Activated naive CD4-positive, alpha-beta T cell treated with anti-CD3 and anti-CD28 coated beads for 36 hours (primary cell): ENCODE measurements at regions of chr16 and their contacts with region 1.

Region 1: GRCh38 chr16:30534368-30535105 is at the start of gene ZNF747:
- DNase-seq: peak; percentile 94
- H3K4me3 Mint-ChIP-seq: peak within 1 kb of the TSS; percentile 96
- H3K27ac Mint-ChIP-seq: peak within 1 kb of the TSS; percentile 99
- H3K4me1 Mint-ChIP-seq: peaks cover 49% of the 10 kb centered on the region
- H3K27me3 Mint-ChIP-seq: no peaks in the 10 kb centered on the region
- total RNA-seq, gene ZNF747: 5.1 to 6.1 TPM

Region 2: DNA sequence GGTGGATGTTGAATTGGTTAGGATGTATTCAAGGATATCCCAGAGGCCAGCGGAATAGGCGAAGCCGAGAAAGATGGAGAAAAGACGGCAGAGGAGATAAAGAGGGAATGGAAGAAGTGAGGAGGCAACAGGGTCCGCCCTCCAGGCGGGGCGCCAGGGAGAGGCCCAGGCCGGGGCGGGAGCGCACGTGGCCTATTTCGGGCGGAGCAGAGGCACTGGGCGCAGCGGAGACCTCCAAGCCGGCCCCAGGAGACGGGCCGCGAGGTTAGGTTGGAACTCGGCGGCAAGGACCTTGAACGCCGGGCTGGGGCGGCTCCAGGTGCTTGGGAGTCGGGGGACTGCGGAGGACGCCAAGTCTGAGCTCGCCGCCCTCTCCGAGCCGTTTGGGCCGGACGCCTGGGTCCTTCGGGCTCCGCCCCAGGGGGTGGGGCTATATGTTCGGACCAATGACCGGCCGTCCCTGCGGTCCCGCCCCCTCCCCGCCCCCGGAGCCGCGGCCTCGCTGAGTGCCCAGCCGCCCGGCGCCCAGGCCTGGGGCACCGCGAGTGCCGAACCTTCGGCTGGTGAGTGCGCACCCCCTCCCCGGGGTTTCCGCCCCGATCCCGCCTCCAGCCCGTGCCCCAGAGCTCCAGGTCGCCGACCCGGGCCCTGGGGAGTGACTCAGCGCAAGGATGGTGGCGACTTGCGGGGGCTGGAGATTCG is 127.3 kb before region 1 on chr16 and contains the start of gene ZNF771:
- CTCF ChIA-PET with region 1: no interaction called
- intact Hi-C with region 1: no loop called
- DNase-seq: peak; percentile 91
- H3K4me3 Mint-ChIP-seq: peak within 1 kb of the TSS; percentile 98
- H3K27ac Mint-ChIP-seq: peak within 1 kb of the TSS; percentile 93
- H3K4me1 Mint-ChIP-seq: peaks cover 32% of the 10 kb centered on the region
- H3K27me3 Mint-ChIP-seq: no peaks in the 10 kb centered on the region
- total RNA-seq, gene ZNF771: 3.4 to 4.7 TPM

Region 3: DNA sequence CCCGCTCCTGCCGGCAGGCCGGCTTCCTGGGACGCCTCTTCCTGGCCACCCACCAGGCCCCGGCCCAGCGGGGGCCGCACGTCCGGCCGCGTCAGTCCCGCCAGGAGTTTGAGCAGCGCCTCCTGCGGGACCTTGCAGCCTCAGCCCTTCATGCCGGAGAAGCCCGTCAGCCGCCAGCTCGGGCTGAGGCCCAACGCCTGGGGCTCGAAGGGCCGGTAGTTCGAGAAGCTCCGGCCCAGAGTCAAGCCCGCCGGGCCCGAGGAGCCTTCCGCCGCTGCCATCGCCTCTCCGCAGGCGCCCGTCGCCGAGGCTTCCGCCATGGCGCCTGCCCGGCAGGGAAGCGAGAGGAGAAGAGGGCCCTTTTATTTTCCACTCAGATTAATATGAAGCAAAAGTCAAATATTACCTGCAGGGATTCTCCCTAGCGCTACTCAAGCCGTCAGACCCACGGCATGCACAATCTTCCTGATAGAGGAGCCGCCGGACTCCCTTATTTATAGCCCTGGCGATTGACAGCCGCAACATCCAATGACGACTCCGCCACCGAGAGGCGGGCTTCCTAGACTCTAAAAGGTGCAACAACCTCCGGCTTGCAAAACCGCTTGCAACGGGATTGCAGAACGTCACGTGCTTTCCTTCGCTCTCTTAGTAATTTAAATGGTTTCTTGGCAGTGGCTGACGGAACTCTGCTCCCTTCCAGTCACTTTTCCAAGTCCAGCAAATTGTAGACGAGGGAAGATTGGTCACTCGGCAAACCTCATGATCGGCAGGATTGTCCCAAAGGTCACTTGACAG is 88.9 kb before region 1 on chr16 and contains the start of gene SEPHS2:
- CTCF ChIA-PET with region 1: interaction called, 26 read pairs
- intact Hi-C with region 1: loop called (anchors 1 kb)
- DNase-seq: peak; percentile 100
- H3K4me3 Mint-ChIP-seq: peak within 1 kb of the TSS; percentile 87
- H3K27ac Mint-ChIP-seq: peak within 1 kb of the TSS; percentile 93
- H3K4me1 Mint-ChIP-seq: peaks cover 39% of the 10 kb centered on the region
- H3K27me3 Mint-ChIP-seq: no peaks in the 10 kb centered on the region
- total RNA-seq, gene SEPHS2: 37.8 to 39.2 TPM

Region 4: DNA sequence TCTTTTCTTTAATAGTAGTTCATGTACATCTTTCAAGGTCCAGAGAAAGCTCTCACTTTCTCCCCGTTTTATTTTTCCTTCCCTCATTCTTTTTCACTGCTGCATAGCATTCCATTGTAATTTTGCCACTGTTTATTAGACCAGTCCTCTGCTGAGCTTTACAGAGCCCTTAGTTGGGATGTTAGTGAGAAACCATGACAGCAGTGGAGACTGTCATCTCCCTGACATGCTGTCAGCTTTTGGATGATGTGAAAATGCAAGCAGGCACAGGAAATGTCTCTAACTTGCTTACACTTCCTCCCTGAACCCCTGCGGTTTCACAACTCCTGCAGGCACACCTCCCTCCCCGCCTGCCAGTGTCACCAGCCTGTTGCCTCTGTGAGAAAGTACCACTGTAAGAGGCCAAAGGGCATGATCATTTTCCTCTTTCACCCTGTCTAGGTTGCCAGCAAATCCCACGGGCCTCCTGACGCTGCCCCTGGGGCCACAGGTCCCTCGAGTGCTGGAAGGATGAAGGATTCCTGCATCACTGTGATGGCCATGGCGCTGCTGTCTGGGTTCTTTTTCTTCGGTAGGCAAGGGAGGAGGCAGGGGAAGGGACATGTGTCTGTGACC is 62.1 kb before region 1 on chr16 and contains the start of gene ITGAL:
- CTCF ChIA-PET with region 1: interaction called, 13 read pairs
- intact Hi-C with region 1: loop called (anchors 1 kb)
- DNase-seq: peak; percentile 95
- H3K4me3 Mint-ChIP-seq: peak within 1 kb of the TSS; percentile 92
- H3K27ac Mint-ChIP-seq: peak within 1 kb of the TSS; percentile 92
- H3K4me1 Mint-ChIP-seq: peaks cover 70% of the 10 kb centered on the region
- H3K27me3 Mint-ChIP-seq: no peaks in the 10 kb centered on the region
- total RNA-seq, gene ITGAL: 83.8 to 89.0 TPM

Region 5: DNA sequence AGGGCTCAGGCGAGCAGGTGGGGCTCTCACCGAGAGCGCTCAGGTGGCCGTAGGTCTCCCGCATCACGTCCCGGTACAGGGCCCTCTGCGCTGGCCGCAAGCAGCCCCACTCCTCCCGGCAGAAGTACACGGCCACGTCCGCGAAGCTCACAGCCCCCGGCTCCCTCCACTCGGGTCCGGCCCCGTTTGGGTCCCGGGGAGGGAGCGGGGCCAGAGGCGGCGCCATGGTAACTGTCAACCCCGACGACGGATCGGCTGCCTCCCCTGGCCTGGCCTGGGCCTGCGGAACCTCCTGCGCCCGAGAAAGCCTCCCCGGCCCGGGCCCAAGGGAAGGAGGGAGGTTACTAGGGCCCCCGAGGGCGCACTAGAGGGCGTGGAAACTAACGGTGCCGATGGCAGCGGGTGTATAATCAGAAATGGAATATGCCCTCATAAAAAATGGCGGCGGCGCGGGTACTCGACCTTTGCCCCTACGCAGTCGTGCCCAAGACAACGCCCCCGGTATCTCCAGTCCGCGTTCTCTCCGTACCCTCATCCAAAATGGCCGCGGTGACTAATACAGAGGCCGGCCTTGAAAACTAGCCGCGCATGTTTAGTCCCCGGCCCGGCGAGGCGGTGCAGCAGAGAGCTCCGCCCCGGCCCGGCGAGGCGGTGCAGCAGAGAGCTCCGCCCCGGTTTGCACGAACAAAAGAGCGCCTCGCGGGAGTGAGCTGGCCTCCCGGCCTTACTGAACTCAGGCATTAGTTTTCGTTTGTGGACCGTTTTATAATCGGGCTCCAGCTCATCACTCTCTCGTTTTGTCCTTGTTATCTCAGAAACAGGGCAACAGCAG is 23.6 kb after region 1 on chr16 and contains the start of gene ZNF764:
- CTCF ChIA-PET with region 1: interaction called, 17 read pairs
- intact Hi-C with region 1: loop called (anchors 2 kb)
- DNase-seq: peak; percentile 99
- H3K4me3 Mint-ChIP-seq: peak within 1 kb of the TSS; percentile 84
- H3K27ac Mint-ChIP-seq: peak within 1 kb of the TSS; percentile 90
- H3K4me1 Mint-ChIP-seq: peaks cover 34% of the 10 kb centered on the region
- H3K27me3 Mint-ChIP-seq: no peaks in the 10 kb centered on the region
- total RNA-seq, gene ZNF764: 7.6 to 9.5 TPM

Region 6: DNA sequence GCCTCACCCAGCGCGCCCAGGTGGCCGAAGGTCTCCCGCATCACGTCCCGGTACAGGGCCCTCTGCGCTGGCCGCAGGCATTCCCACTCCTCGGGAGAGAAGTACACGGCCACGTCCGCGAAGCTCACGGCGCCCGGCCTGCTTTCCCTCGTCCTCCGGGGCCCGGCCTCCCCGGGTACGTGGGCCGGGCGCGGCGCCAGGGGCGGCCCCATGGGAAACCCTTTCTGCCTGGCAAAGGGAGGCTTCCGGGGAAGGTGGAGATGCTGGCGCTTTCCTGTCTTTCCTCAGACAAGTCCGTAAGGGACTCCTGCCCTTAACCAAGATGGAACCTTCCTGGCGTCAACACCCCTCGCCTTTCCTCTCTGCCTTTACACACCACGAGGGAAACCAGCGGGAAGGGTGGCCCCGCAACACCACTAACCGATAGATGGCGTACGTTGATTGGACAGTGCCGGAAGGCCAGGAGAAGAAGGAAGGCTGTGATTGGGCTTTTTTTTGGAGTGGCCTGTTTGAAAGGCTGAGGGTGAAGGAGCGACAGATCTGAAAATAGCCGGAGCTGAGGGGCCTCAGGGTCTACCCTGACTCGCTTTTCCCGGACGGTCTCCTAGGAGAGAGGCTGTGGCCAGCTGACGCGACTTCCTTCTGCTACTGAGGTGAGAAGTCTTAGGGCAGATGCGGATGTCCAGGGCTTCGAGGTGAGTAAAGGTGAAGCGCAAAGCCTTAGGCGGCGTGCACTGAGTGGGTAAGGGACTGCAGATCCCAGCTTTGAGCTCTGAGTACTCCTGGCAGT is 51.1 kb after region 1 on chr16 and contains the start of gene ZNF785:
- CTCF ChIA-PET with region 1: interaction called, 10 read pairs
- intact Hi-C with region 1: loop called (anchors 1 kb)
- DNase-seq: peak; percentile 98
- H3K4me3 Mint-ChIP-seq: peak within 1 kb of the TSS; percentile 90
- H3K27ac Mint-ChIP-seq: peak within 1 kb of the TSS; percentile 90
- H3K4me1 Mint-ChIP-seq: peaks cover 32% of the 10 kb centered on the region
- H3K27me3 Mint-ChIP-seq: no peaks in the 10 kb centered on the region
- total RNA-seq, gene ZNF785: 11.9 to 13.2 TPM

Region 7: DNA sequence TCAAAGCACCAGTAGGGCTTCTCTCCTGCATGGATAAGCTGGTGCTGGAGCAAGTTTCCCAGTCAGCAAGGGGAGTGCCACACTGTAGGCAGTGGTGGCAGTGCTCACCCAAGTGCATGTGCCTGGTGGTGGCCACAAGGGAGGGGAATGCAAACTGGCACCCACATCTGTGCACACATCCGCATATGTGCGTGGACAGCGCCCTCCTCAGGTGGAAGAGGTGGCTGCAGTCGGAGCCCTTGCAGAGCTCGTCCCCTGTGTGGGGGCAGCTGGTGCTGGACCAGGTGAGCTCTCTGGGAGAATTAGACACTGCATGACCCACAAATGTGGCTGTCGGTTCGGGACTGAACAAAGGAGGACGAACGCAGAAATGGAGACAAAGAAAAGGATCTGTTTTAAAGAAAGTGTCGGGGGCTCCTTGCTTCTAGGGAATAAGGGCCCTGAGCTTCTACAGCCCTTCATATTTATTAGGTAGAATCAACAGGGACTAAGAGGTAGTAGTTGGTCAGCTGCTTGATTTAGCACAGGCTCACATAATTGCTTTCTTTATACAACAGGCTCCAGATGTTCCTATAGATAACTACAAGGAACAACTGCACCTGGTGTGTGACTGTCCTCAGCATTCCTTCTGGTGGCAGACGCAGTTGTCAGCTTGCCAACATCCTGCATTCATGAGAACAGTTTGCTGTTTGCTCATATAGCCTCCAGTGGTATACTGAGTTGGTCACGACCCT is 81.0 kb after region 1 on chr16:
- CTCF ChIA-PET with region 1: interaction called, 11 read pairs
- intact Hi-C with region 1: no loop called
- DNase-seq: peak; percentile 91
- H3K4me3 Mint-ChIP-seq: no peak overlapping the region
- H3K27ac Mint-ChIP-seq: no peak overlapping the region
- H3K4me1 Mint-ChIP-seq: peaks cover 3% of the 10 kb centered on the region
- H3K27me3 Mint-ChIP-seq: no peaks in the 10 kb centered on the region

Region 8: DNA sequence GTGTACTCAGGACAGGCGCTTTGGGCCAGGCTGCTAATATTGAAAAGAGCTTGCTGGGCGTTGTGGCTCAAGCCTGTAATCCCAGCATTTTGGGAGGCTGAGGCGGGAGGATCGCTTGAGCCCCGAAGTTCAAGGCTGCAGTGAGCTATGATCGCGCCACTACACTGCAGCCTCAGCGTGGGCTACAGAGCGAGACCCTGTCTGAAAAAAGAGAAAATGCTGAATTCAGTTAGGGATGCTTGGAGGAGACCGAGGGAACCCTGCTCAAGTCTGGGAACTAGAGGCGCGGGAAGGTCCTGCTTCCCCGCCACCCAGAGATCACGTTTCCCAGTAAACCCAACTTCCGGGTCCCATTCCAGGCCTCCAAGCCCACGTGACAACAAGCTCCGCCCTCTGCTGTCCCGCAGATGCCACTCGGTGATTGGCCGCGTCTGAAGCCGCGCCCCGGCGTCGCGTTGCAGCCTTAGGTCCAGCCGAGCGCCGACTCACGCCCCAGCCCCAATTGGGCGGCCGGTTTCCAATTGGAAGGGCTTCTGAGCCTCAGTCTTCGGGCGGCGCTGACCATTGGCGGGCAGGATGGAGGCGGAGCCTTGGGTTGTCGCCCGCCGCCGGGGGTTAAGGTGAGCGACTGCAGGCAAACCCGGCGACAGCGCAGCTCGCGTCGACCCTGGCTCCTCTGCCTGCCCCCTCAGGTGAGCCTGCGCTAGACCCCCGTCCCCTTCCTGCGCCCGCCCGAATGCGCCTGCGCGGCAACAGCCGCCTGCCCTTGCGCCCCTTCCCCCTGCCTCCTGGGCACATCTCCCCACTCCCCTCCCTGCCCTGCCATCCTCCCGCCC is 213.5 kb after region 1 on chr16 and contains the start of gene PHKG2:
- CTCF ChIA-PET with region 1: no interaction called
- intact Hi-C with region 1: no loop called
- DNase-seq: peak; percentile 99
- H3K4me3 Mint-ChIP-seq: peak within 1 kb of the TSS; percentile 89
- H3K27ac Mint-ChIP-seq: peak within 1 kb of the TSS; percentile 86
- H3K4me1 Mint-ChIP-seq: peaks cover 19% of the 10 kb centered on the region
- H3K27me3 Mint-ChIP-seq: no peaks in the 10 kb centered on the region
- total RNA-seq, gene PHKG2: 23.3 to 26.4 TPM